ENCODE measurements at regions of chr4 and their contacts with region 1.

Region 1: DNA sequence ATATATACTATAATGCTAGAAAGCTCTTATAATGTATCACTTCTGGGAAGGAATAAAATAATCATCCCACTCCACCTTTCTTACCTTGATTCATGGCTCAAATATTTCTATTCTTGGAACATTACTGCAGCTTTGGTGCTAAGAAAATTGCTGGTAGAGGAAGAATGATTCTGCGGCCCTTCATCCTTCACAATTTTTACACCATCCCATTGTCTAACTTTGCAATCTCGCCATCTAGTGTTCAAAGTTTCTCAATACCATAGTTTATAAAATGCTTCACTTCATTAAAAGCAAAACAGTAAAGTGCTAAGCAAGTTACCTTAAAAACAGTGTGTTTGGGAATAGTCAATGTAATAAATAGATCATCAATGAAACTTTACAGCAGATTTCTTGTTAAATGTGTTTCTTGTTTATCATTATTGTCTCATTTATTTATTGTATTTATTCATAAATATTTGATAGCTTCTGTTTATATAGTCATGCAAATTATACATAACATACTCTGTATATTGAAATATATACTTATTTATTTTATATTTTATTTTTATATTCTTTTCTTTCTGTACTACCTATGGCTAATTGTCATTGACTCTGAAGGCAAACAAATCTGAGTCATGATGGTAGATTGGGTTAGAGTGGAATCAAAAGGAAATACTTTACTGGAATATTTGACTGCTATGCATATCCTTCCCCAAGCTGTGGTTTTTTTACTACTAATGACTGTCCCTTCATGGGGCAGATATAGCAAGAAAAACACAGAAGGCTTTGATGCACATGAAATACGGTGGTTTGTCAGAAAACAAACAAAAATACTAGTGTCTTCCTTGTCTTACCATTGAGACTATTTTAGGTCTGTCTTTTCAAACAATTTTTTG is 390.7 kb downstream of the MAPK10 start:
- DNase-seq: peak; percentile 72
- ATAC-seq: peak; percentile 72
- H3K4me3 ChIP-seq: no peak overlapping the region
- H3K27ac ChIP-seq: no peak overlapping the region
- H3K4me1 ChIP-seq: peaks cover 6% of the 10 kb centered on the region; the same call in 1 of the 2 replicates
- H3K27me3 ChIP-seq: no peaks in the 10 kb centered on the region
- CTCF ChIP-seq: peak; percentile 69
- POLR2A ChIP-seq: no peak
- RAD21 ChIP-seq: peak; percentile 73

Region 2: GRCh38 chr4:85147439-85148076 is 821.6 kb before region 1 on chr4:
- CTCF ChIA-PET with region 1: no interaction called
- POLR2A ChIA-PET with region 1: no interaction called
- dilution Hi-C with region 1: no loop called
- in situ Hi-C with region 1: no loop called
- intact Hi-C with region 1: loop called (anchors 2 kb)
- DNase-seq: peak; percentile 54
- ATAC-seq: peak; percentile 76
- H3K4me3 ChIP-seq: no peak overlapping the region
- H3K27ac ChIP-seq: no peak overlapping the region
- H3K4me1 ChIP-seq: no peaks in the 10 kb centered on the region
- H3K27me3 ChIP-seq: peaks cover 1% of the 10 kb centered on the region; the same call in 1 of the 2 replicates
- CTCF ChIP-seq: peak; percentile 57
- POLR2A ChIP-seq: no peak
- RAD21 ChIP-seq: peak; percentile 48

Region 3: GRCh38 chr4:85370430-85371032 is 598.7 kb before region 1 on chr4:
- CTCF ChIA-PET with region 1: no interaction called
- POLR2A ChIA-PET with region 1: no interaction called
- dilution Hi-C with region 1: no loop called
- in situ Hi-C with region 1: no loop called
- intact Hi-C with region 1: loop called (anchors 10 kb)
- DNase-seq: peak; percentile 18
- ATAC-seq: peak; percentile 87
- H3K4me3 ChIP-seq: no peak overlapping the region
- H3K27ac ChIP-seq: no peak overlapping the region
- H3K4me1 ChIP-seq: no peaks in the 10 kb centered on the region
- H3K27me3 ChIP-seq: no peaks in the 10 kb centered on the region; the same call in 1 of the 2 replicates
- CTCF ChIP-seq: peak; percentile 57
- POLR2A ChIP-seq: no peak
- RAD21 ChIP-seq: peak; percentile 43

Region 4: DNA sequence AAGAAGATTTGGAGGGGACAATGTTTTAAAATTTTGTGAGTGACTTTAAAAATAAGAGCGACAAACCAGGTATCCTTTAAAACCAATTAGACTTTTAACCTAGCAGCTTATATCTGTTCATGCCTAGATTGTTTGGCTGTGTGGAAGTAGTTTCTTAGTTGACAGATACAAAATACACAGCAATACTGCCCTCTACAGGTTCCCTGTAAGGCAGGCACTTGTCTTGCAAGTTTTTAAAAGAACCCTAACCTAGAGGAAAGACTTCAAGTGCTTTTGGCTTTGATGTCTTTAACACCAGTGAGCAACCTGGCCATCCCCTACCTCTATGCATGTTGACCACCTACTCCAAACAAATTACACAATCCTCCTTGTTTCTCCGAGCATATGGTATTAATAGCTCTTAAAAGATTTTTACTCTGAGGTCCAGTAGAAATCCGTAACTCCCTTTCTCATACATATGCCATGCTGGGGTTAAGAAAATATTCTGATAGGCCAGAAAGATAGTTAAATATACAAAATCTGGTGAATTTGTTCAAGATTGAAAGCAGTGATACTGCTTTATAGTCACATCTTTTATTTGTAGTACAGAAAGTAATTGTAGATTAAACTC is 221.2 kb before region 1 on chr4:
- CTCF ChIA-PET with region 1: no interaction called
- POLR2A ChIA-PET with region 1: no interaction called
- dilution Hi-C with region 1: no loop called
- in situ Hi-C with region 1: loop called (anchors 5 kb)
- intact Hi-C with region 1: no loop called
- DNase-seq: peak; percentile 83
- ATAC-seq: peak; percentile 83
- H3K4me3 ChIP-seq: no peak overlapping the region
- H3K27ac ChIP-seq: no peak overlapping the region
- H3K4me1 ChIP-seq: no peaks in the 10 kb centered on the region
- H3K27me3 ChIP-seq: no peaks in the 10 kb centered on the region
- CTCF ChIP-seq: peak; percentile 89
- POLR2A ChIP-seq: no peak
- RAD21 ChIP-seq: peak; percentile 81

Region 5: DNA sequence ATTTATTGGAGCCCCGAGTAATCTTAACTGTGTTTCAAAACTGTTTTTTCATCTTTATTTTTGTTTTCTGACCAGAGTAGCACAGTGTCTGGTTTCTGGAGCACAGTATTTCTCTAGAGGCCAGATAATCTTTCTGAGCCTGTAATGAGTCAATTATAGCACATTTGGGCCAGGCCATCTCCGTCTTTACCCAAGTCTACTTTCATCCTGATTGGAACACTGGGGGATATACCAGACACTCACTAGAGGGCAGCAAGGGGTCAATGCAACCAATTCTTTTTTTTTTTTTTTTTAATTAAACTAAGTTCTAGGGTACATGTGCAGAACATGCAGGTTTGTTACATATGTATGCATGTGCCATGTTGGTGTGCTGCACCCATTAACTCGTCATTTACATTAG is 212.2 kb before region 1 on chr4:
- CTCF ChIA-PET with region 1: interaction called, 9 read pairs
- POLR2A ChIA-PET with region 1: no interaction called
- dilution Hi-C with region 1: no loop called
- in situ Hi-C with region 1: loop called (anchors 5 kb)
- intact Hi-C with region 1: loop called (anchors 1 kb)
- DNase-seq: peak; percentile 62
- ATAC-seq: peak; percentile 87
- H3K4me3 ChIP-seq: no peak overlapping the region
- H3K27ac ChIP-seq: no peak overlapping the region
- H3K4me1 ChIP-seq: peaks cover 10% of the 10 kb centered on the region; the same call in 1 of the 2 replicates
- H3K27me3 ChIP-seq: no peaks in the 10 kb centered on the region
- CTCF ChIP-seq: peak; percentile 64
- POLR2A ChIP-seq: no peak
- RAD21 ChIP-seq: peak; percentile 67

Region 6: DNA sequence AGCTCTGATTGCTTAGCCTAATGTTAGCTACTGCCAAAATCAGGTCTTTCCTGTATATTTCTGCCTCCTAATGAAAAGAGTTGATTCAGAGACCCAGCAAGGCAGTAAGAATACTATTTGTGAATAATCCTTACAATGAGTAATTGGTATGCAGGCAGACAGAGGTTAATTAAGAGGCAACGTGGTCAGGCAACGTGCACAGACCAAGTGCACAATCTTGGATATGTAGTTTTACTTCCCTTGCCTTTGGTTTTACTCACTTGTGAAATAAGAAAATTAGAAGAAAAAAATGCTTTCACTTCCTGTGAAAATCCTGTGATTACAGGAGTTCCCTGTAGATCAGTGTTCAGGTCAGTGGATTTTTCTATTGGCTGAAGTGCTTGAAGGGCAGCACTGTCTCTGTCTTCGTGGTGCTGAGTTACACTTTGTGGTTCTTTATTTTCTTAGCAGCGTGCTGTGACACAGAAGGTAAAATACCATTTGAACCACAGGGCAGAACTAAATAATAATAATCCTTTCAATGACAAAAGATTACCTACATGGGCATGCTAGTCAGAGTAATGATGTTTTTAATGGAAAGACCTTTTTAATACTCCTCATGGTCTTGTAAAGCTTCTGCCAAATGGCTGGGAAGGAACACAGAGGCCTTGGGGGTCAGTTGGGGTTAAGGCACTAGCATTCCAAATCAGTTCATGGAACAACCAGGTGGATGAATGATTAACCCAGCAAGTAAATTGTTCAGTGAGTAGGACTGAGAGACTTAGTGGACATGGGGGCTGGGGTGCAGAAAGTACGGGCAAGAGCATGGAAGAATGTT is 40.2 kb before region 1 on chr4:
- CTCF ChIA-PET with region 1: no interaction called
- POLR2A ChIA-PET with region 1: no interaction called
- dilution Hi-C with region 1: no loop called
- in situ Hi-C with region 1: no loop called
- intact Hi-C with region 1: loop called (anchors 1 kb)
- DNase-seq: peak; percentile 47
- ATAC-seq: peak; percentile 59
- H3K4me3 ChIP-seq: no peak overlapping the region
- H3K27ac ChIP-seq: no peak overlapping the region
- H3K4me1 ChIP-seq: peaks cover 10% of the 10 kb centered on the region
- H3K27me3 ChIP-seq: no peaks in the 10 kb centered on the region
- CTCF ChIP-seq: no peak
- POLR2A ChIP-seq: no peak
- RAD21 ChIP-seq: no peak

Region 7: DNA sequence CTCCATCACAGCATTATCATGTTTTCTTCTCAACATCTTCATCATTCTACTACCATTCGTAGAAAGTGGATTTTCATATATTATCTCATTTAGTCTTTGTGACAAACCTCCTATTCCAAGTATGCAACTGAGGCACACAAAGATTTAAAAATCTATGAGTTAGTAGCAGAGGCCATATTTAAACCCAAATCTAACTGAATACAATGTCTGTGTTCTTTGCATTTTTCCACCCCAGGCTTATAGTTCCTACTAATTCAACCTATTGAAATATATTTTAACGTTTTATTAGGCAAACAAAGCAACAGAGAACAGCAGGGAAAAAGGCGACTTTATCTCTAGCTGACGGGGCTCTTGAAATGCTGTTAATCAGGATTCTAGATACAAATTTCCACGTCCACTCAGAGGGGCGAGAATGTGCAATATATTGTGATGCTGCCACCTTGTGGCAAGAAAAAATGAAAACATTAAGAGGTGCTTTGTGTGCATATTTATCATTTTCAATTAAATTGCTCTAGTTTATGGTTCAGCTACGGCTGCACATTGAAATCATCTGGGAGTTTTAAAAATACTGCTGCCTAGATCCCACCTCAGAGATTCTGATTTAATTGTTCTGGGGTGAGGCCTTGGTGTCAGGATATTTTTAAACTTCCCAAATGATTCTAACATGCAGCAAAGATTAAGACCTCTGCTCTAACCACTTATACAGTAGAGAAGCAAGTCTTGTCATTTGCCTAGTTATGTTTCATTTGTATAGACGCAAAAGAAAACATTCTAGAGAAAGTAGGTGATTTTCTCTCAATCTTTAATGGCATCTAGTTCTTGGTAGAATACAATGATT is 74.8 kb after region 1 on chr4:
- CTCF ChIA-PET with region 1: no interaction called
- POLR2A ChIA-PET with region 1: no interaction called
- dilution Hi-C with region 1: no loop called
- in situ Hi-C with region 1: no loop called
- intact Hi-C with region 1: loop called (anchors 1 kb)
- DNase-seq: peak; percentile 55
- ATAC-seq: peak; percentile 74
- H3K4me3 ChIP-seq: no peak overlapping the region
- H3K27ac ChIP-seq: no peak overlapping the region
- H3K4me1 ChIP-seq: no peaks in the 10 kb centered on the region
- H3K27me3 ChIP-seq: no peaks in the 10 kb centered on the region
- CTCF ChIP-seq: peak; percentile 67
- POLR2A ChIP-seq: no peak
- RAD21 ChIP-seq: peak; percentile 79

Region 8: GRCh38 chr4:86675548-86675947 is 706.4 kb after region 1 on chr4:
- CTCF ChIA-PET with region 1: no interaction called
- POLR2A ChIA-PET with region 1: no interaction called
- dilution Hi-C with region 1: no loop called
- in situ Hi-C with region 1: no loop called
- intact Hi-C with region 1: no loop called
- DNase-seq: no peak
- ATAC-seq: no peak
- H3K4me3 ChIP-seq: no peak overlapping the region
- H3K27ac ChIP-seq: no peak overlapping the region
- H3K4me1 ChIP-seq: no peaks in the 10 kb centered on the region
- H3K27me3 ChIP-seq: no peaks in the 10 kb centered on the region
- CTCF ChIP-seq: no peak
- POLR2A ChIP-seq: no peak
- RAD21 ChIP-seq: no peak

Measured in IMR-90 (cell line).